Uterus (tissue), 4 donors: ENCODE measurements at regions of chr2 and their contacts with region 1.

Region 1: DNA sequence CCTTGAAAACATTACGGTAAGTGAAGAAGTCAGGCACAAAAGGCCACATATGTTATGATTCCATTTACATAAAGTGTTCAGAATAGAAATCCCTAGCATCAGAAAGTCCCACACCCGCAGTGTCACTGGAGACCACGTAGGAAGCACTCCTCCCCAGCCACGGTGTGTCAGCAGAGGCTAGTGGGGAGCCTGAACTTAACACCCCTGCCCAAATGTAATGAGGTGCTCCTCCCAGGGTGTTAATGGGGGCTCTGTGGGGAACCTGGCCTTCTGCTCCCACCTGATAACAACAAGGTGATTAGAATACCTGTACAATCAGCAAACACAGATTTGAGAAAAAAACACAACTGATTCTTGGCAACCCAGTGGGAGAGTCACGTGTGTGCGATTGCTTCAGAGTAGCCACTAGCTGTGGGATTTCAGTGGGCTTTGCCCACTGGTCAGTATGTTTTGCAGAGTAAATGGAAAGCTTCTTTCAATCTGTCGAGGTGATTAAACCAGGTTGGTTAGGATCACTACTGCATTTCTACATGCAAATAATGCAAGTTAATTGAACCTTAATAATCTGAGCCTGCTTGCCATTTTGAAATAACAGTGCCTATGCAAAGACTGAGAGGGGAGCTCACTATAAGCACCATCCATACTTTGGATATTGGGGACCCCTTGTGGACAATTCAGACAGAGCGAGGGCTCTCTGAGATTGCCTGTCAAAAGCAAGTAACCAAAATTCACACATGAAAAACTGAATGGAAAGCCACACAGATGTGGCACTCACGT is 20.6 kb upstream of the ATRAID start:
- DNase-seq: peak; percentile 65 to 79
- H3K4me3 ChIP-seq: no peak overlapping the region
- H3K27ac ChIP-seq: no peak overlapping the region
- H3K4me1 ChIP-seq: peaks cover 0 to 6% of the 10 kb centered on the region in 2 donors
- H3K27me3 ChIP-seq: no peaks in the 10 kb centered on the region
- CTCF ChIP-seq: peak; percentile 74 to 84 (median 82)
- POLR2A ChIP-seq: no peak

Region 2: DNA sequence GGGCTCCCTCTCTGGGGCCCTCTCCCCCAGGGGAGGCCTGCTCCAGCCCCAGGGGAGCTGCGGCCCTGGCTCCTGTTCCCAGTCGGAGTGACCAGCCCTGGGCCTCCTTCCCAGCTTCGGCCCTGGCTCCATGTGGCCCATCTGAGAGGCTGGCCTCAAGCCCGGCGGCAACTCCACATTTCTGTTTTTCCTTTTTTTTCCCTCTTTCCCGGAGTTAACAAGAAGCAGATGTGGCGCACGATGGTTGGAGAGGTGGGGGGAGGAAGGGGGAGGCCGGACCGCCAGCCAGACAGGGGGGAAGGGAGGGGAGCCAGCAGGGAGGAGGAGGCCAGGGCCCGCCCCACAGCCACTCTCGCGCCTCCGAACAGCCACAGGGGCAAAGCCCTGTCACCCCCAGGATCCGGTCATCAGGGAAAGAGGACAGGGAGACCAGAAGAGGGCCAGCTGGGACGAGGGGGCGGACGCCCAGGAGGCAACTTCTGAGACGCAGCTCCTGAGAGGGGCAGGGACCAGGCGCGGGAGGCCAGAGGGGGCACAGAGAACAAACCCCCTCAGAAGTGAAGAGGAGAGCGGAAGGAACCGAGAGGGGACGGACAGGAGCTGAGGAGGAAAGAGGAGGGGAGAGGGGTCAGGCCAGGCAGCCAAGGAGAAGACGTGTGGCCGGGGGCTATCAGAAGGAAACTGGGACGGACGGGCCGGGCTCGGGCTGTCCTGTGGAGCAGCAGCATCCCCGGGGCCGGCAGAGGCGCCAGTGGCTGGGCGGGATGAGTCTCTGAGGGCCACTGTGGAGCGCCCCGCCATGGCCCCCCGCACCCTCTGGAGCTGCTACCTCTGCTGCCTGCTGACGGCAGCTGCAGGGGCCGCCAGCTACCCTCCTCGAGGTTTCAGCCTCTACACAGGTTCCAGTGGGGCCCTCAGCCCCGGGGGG is 112.7 kb before region 1 on chr2 and contains the start of gene EMILIN1:
- intact Hi-C with region 1: no loop called
- DNase-seq: peak; percentile 93 to 96
- H3K4me3 ChIP-seq: peak within 1 kb of the TSS; percentile 52 to 84
- H3K27ac ChIP-seq: peak within 1 kb of the TSS; percentile 92 to 98
- H3K4me1 ChIP-seq: peaks cover 5 to 14% of the 10 kb centered on the region in 2 donors
- H3K27me3 ChIP-seq: no peaks in the 10 kb centered on the region
- CTCF ChIP-seq: peak in 1 of 4 experiments; percentile 17
- POLR2A ChIP-seq: peak; percentile 41 to 70
- total RNA-seq, gene EMILIN1: 107 to 377 (median 224) TPM

Region 3: GRCh38 chr2:27133905-27134780 is 57.1 kb before region 1 on chr2 and contains the start of gene PREB:
- intact Hi-C with region 1: loop called (anchors 10 kb)
- DNase-seq: peak; percentile 95 to 98
- H3K4me3 ChIP-seq: peak within 1 kb of the TSS; percentile 83 to 99
- H3K27ac ChIP-seq: peak within 1 kb of the TSS; percentile 89 to 96
- H3K4me1 ChIP-seq: peaks cover 0 to 12% of the 10 kb centered on the region in 2 donors
- H3K27me3 ChIP-seq: no peaks in the 10 kb centered on the region
- CTCF ChIP-seq: peak; percentile 41 to 68 (median 42)
- POLR2A ChIP-seq: peak; percentile 86 to 98
- total RNA-seq, gene PREB: 37.7 to 91.0 (median 62.9) TPM